ENCODE measurements at regions of chr6 and their contacts with region 1.

Region 1: DNA sequence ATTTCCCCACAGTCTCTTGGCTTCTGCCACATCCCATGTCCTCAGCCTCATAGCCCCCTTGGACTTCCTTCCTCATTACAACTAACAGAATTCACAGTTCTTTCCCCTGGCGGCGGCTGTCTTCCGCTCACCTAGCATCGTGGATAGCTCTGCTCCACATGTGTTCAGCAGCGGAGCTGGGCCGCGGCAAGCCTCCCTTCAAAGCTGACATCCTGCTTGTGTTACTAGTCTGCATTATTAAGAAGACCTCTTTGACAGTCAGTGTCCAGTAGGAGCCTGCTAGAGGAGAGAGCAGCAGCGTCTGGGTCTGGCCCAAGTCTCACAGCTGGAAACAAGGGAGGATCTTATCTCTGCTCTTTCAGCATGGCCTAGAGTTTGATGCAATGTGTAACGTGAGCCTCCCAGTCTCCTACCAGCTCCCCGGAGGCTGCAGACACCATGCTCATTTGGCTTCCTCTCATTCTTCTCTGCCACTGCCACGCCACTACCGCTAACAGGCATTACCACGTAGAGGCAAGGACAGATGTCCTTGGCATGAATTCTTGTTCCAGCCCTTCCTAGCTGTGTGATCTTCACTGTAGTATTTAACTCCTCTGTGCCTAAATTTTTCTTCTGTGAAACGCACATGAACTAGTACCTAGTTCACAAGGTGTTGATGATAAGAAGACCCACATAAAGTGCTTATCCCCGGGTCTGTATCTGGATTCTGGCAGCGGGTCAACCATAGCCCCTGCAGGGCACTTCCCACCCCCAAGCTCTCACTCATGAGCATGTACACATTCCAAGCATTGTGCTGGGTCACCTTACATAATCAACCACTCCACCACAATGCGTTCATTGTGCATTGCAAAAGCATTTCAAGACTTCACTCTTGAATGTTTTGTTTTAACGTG is 107.1 kb upstream of the BACH2 start:
- DNase-seq: no peak
- H3K4me3 ChIP-seq: no peak overlapping the region
- H3K4me3 Mint-ChIP-seq: peak overlapping the region in 4 of 7 donors; percentile 21 to 78 (median 57)
- H3K27ac ChIP-seq: no peak overlapping the region
- H3K27ac Mint-ChIP-seq: peak overlapping the region; percentile 84 to 96 (median 94)
- H3K4me1 ChIP-seq: peaks cover 31% of the 10 kb centered on the region
- H3K4me1 Mint-ChIP-seq: peaks cover 63 to 79% (median 75%) of the 10 kb centered on the region in 3 donors
- H3K27me3 ChIP-seq: no peaks in the 10 kb centered on the region
- H3K27me3 Mint-ChIP-seq: no peaks in the 10 kb centered on the region

Region 2: DNA sequence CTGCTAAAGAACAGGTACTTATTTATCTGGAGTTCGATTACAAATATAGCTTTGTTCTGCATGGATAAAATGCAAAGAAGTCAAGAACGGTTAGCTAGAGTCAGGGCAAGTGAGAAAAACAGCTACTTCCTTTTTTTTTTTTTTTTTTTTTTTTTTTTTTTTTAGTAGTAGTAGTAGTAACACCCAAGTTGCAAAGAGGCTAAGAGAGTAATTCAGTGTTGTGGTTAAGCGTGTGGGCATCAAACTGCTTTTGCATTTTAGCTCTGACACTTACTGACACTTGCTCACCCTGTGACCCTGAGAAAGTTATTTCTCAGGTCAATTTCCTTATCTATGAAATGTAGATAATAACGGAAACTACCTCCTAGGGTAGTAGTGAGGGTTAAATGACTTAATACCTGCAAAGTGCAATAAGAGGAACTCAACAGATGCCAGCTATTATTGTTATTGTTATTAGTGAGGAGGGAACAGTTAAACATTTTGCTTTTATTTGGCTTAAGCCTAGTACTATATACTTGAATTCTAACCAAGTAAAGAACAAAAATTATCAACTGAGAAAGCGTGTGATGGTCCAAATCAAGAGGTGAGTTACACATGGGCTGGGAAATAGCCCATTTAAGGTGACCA is 20.4 kb before region 1 on chr6:
- CTCF ChIA-PET with region 1: no interaction called
- POLR2A ChIA-PET with region 1: no interaction called
- DNase-seq: peak in 2 of 5 donors; percentile 23 to 40
- H3K4me3 ChIP-seq: no peak overlapping the region
- H3K4me3 Mint-ChIP-seq: no peak overlapping the region
- H3K27ac ChIP-seq: no peak overlapping the region
- H3K27ac Mint-ChIP-seq: no peak overlapping the region
- H3K4me1 ChIP-seq: peaks cover 13% of the 10 kb centered on the region
- H3K4me1 Mint-ChIP-seq: peaks cover 19 to 22% (median 20%) of the 10 kb centered on the region in 3 donors
- H3K27me3 ChIP-seq: no peaks in the 10 kb centered on the region
- H3K27me3 Mint-ChIP-seq: peaks cover 7 to 17% of the 10 kb centered on the region in 2 donors

Region 3: DNA sequence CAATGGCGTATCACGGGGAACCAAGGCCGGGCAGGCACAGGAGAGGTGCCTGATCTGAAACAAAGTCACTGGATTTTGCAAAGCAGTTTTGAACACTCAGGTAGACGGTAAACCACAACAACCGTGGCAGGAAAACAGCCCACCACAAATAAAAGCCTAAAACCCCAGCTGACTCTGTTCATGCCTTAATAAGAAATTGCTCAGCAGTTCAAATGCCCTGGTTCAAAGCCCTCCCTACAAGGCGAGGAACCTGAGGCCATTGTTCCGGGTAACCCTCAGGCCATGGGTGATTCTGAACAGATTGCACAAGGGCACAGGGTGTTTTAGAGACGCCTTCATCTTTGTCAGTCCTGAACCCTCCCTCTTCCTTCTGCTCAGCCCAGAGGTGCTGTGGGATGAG is 69.0 kb after region 1 on chr6:
- CTCF ChIA-PET with region 1: interaction called, 17 read pairs
- POLR2A ChIA-PET with region 1: interaction called, 3 read pairs
- DNase-seq: peak in 1 of 5 donors; percentile 52
- H3K4me3 ChIP-seq: peak overlapping the region; percentile 30
- H3K4me3 Mint-ChIP-seq: peak overlapping the region in 6 of 7 donors; percentile 62 to 83 (median 74)
- H3K27ac ChIP-seq: no peak overlapping the region
- H3K27ac Mint-ChIP-seq: peak overlapping the region in 4 of 8 donors; percentile 20 to 64 (median 54)
- H3K4me1 ChIP-seq: peaks cover 32% of the 10 kb centered on the region
- H3K4me1 Mint-ChIP-seq: peaks cover 36 to 53% (median 51%) of the 10 kb centered on the region in 3 donors
- H3K27me3 ChIP-seq: no peaks in the 10 kb centered on the region
- H3K27me3 Mint-ChIP-seq: peaks cover 0 to 5% of the 10 kb centered on the region in 2 donors

Region 4: GRCh38 chr6:91337967-91338366 is 934.2 kb after region 1 on chr6:
- CTCF ChIA-PET with region 1: no interaction called
- POLR2A ChIA-PET with region 1: no interaction called
- DNase-seq: no peak
- H3K4me3 ChIP-seq: no peak overlapping the region
- H3K4me3 Mint-ChIP-seq: no peak overlapping the region
- H3K27ac ChIP-seq: no peak overlapping the region
- H3K27ac Mint-ChIP-seq: no peak overlapping the region
- H3K4me1 ChIP-seq: no peaks in the 10 kb centered on the region
- H3K4me1 Mint-ChIP-seq: no peaks in the 10 kb centered on the region
- H3K27me3 ChIP-seq: no peaks in the 10 kb centered on the region
- H3K27me3 Mint-ChIP-seq: no peaks in the 10 kb centered on the region